Left ventricle myocardium inferior (tissue), 1 donor: ENCODE measurements at regions of chr3 and their contacts with region 1.

Region 1: GRCh38 chr3:142987080-142987700 is 14.2 kb upstream of the U2SURP start:
- DNase-seq: no peak
- H3K4me3 ChIP-seq: peak overlapping the region; percentile 11
- H3K27ac ChIP-seq: peak overlapping the region; percentile 67
- H3K4me1 ChIP-seq: peaks cover 10% of the 10 kb centered on the region
- H3K27me3 ChIP-seq: no peaks in the 10 kb centered on the region
- CTCF ChIP-seq: peak; percentile 78

Region 2: DNA sequence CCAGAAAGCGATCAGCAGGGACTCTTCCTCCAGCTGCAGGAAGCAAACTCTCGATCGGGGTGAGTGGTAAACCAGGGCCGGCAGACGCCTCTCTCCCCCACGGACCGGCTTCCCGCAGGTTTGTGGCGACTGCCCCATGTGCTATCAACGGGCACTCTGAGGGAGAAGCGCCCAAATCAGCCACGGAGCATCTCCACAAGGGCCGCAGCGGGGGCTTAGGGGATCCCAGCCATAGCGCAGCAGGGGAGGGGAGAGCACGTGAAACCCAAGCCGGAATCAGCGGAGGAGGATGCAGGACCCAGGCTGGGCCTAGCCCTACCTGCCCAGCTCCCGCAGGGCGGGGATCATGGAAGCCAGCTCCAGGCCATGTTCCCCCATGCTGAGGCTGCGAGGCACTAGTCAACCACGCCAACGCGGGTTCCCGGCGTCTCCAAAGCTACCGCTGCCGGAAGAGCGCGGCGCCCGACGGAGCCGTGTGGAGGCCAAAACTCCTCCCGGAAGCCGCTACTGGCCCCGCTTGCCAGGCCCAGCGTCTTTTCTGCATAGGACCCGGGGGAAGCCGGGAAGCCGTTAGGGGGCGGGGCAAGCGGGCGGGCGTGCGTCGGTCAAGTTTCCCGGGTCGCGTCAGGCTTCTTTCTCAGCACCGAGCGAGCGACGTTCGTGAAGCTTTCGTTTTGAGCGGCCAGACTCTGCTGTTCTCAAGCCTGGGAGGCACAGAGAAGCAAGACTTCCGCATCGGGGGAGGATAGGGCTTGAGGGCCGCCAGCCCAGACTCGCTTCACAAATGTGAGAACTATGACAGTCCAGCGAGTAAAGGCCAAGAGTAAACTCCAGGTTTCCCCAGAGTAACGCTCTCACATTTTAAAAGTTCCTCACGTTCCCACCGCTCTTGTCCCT is 408.6 kb before region 1 on chr3 and contains the start of gene ATR:
- intact Hi-C with region 1: no loop called
- DNase-seq: peak; percentile 97
- H3K4me3 ChIP-seq: peak within 1 kb of the TSS; percentile 97
- H3K27ac ChIP-seq: peak within 1 kb of the TSS; percentile 96
- H3K4me1 ChIP-seq: peaks cover 40% of the 10 kb centered on the region
- H3K27me3 ChIP-seq: no peaks in the 10 kb centered on the region
- CTCF ChIP-seq: no peak
- total RNA-seq, gene ATR: 9.1 TPM

Region 3: GRCh38 chr3:142828703-142829305 is 158.4 kb before region 1 on chr3:
- intact Hi-C with region 1: loop called (anchors 2 kb)
- DNase-seq: peak; percentile 80
- H3K4me3 ChIP-seq: no peak overlapping the region
- H3K27ac ChIP-seq: no peak overlapping the region
- H3K4me1 ChIP-seq: peaks cover 5% of the 10 kb centered on the region
- H3K27me3 ChIP-seq: no peaks in the 10 kb centered on the region
- CTCF ChIP-seq: peak; percentile 89

Region 4: DNA sequence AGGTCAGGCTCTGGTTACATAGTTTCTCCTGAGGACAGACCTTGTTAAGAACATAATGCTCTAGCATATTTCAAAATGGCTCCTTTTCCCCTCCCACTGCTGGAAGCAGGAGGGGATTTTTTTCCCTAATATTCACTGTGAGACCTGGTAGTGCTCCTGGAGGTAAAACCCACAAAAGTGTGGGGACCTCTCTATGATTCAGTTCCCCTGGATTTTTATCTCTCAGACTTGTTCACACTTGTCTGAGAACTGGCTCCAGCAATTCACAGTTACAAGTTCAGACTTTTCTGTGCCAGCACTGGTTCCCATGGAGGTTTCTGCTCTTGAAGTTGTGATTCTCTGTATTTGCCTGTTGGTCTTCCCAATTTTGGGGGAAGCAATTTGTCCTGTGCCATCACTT is 62.0 kb before region 1 on chr3:
- intact Hi-C with region 1: no loop called
- DNase-seq: no peak
- H3K4me3 ChIP-seq: no peak overlapping the region
- H3K27ac ChIP-seq: no peak overlapping the region
- H3K4me1 ChIP-seq: peaks cover 5% of the 10 kb centered on the region
- H3K27me3 ChIP-seq: no peaks in the 10 kb centered on the region
- CTCF ChIP-seq: no peak

Region 5: DNA sequence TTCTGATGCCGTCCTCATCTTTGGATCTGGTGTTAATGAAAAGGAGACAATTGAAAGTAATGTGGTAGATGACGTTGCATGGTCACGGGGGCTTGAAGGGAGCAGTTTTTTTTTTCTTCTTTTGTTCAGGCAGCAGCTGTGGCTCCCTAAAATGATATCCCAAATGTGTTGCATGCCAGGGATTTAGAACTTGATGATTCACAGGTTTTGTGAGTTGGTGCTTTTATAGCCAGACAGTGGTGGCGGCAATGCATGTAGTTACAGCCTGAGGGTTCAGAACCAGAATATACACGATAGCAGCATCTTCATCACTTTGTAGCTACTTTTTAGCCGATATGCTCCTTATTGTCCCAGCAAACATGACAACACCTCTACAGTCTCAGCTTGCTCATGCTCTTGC is 265.7 kb after region 1 on chr3:
- intact Hi-C with region 1: no loop called
- DNase-seq: no peak
- H3K4me3 ChIP-seq: no peak overlapping the region
- H3K27ac ChIP-seq: no peak overlapping the region
- H3K4me1 ChIP-seq: no peaks in the 10 kb centered on the region
- H3K27me3 ChIP-seq: no peaks in the 10 kb centered on the region
- CTCF ChIP-seq: no peak

Region 6: GRCh38 chr3:144743225-144743668 is 1756.1 kb after region 1 on chr3:
- intact Hi-C with region 1: no loop called
- DNase-seq: no peak
- H3K4me3 ChIP-seq: no peak overlapping the region
- H3K27ac ChIP-seq: no peak overlapping the region
- H3K4me1 ChIP-seq: no peaks in the 10 kb centered on the region
- H3K27me3 ChIP-seq: no peaks in the 10 kb centered on the region
- CTCF ChIP-seq: no peak